ENCODE measurements at regions of chr1 and their contacts with region 1.

Region 1: DNA sequence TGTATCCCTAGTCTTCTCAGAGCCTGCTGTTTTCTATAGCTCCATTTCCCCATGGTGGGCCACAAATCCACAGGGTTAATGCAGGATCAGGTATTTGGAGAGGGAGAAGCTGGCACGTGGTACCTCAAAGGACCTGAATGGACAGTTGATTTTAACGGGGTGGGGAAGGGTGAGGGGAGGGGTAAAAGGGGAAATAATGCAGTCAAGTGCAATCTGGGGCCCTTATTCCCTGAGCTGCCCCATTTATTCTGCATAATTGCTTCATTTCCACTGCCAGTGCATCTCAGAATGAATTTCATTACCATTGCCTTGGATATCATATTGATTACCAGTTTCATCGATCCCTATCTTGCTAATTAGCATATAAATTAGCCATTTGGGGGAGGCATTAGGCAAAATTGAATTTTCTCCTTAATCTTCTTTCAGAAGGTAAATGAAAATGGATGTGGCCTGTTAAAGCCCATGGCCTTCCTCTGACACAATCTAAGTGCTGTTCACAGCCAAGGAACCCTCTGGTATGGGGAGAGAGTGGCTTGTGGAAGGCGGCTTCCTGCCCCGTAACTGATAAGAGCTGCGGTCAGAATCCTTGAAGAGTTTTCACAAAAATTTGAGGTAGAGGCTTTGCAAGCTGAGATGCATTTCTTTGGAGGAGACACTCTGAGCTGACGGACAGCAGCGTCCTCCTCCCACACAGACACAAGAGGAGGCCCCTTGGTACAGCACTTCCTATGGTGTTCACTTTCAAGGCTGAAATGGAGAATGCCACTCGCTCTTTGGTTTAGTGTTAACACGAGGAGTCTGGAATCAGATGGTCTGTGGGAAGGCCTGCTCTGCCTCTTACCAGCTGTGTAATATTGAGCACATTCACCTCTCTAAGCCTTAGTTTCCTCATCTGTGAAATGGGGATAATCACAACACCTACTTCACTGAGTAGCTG is 34.4 kb downstream of the PHC2 start:
- DNase-seq: no peak
- H3K4me3 ChIP-seq: no peak overlapping the region
- CTCF ChIP-seq: no peak

Region 2: DNA sequence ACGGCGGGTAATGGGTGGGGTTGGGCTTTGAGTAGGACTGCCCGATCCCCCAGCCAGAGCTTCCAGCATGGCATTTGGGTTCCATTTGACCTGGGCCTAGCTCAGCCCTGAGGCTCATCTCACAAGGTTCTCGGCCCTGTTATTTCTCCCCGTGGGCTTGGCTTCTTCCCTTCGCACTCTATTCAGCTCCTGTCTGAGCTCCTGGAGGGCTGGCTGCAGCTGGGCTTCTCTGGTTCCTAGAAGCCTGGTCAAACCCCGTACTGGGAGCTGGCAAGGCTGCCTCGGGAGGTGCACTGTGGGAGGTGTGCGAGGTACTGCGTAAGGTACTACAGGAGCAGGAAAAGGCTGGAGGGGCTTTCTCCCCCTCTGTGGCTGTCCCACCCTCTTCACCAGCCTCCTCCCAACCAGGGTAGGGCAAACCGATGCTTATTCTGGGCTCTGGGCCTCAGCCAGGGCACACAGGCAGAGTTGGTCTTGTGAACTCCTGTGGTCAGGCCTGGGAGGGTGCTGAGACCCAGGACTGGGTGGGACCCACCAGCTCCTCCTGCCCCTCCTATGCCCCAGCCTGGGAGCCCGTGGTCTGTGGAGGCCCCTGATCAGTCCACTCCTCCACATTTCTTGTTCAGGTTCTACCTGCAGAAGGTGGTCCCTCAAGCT is 76.4 kb before region 1 on chr1:
- in situ Hi-C with region 1: loop called (anchors 5 kb)
- DNase-seq: no peak
- H3K4me3 ChIP-seq: no peak overlapping the region
- CTCF ChIP-seq: no peak

Measured in astrocyte of the cerebellum (primary cell).